SK-N-SH (cell line): ENCODE measurements at regions of chr3 and their contacts with region 1.

Region 1: DNA sequence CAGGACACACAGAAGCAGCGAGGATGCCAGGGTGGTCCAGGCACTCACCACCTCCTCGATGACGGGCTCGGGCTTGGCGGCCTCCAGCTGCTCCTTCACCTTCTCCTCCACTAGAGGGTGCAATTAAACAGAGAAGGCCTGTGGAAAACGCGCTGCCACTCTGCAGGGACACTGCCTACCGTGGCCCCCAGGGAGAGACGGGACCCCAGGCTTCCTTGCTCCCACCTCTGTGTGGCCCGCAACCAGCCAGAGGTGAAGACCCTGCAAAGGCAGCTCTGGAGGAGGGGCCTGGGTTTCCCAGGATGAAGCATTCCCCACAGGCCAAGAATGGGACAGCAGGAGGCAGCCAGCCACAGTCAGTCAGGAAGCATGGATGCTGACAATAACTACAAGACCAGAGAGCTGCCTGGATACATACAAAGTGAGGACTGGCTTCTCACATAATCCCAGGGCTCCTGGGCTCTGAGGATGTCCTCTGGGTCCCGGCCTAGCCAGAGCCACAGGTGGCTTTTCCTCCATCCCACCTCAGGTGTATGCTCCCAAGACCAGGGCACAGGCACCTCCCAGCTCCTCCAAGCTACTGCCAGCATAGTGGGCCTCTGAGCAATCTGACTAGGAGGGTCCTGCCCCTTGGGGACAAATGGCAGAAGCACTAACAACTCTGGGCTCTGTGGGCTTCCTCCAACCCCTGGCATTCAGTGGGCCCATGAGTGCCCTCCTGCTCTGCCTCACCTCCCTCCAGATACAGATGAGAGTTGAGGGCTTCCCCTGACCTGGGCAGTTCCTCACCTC is 46.2 kb downstream of the PTH1R start:
- DNase-seq: peak; percentile 79
- H3K4me3 ChIP-seq: peak overlapping the region in 1 of 2 experiments; percentile 35; a peak in 1 of 4 replicates
- H3K27ac ChIP-seq: no peak overlapping the region
- H3K4me1 ChIP-seq: no peaks in the 10 kb centered on the region
- H3K27me3 ChIP-seq: no peaks in the 10 kb centered on the region
- CTCF ChIP-seq: peak; percentile 81
- EP300 ChIP-seq: no peak
- RAD21 ChIP-seq: peak; percentile 81

Region 2: DNA sequence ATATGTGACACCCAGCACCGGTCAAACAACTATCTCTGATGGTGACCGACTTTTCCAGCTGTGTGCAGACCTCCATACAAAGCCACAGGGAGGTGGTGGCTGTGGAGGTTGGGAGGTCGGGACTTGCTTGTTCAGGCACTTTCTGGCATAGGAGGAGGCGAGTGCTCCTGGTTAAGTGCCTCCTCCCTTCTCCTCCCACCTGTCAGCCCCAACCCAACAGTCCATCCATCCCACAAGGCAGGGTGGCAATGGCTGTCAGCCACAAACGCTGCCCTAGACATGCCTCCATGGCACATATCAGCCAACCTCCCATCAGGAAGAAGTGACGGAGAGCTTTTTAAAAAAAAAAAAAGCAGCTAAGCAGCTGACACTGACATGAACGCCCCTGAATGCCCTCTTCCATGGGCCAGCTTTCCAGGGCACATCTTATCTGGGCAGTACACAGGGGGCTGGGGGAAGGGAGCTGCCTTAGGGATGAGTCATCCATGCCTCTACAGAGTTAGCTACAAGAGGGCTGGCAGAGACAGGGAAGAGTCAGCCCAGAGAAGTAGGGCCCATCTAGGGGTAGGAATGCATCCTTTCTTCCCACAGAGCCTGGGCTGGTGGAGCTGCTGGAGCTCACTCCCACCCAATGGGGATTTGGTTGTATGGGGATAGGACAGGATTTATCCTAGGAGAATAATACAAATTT is 11.6 kb after region 1 on chr3:
- CTCF ChIA-PET with region 1: interaction called, 31 read pairs
- POLR2A ChIA-PET with region 1: no interaction called
- DNase-seq: peak; percentile 64
- H3K4me3 ChIP-seq: no peak overlapping the region
- H3K27ac ChIP-seq: peak overlapping the region; percentile 89 to 91
- H3K4me1 ChIP-seq: peaks cover 53 to 54% of the 10 kb centered on the region in 2 experiments
- H3K27me3 ChIP-seq: no peaks in the 10 kb centered on the region
- CTCF ChIP-seq: peak; percentile 82
- EP300 ChIP-seq: peak; percentile 50 to 75; a peak in 2 of 4 replicates
- RAD21 ChIP-seq: peak; percentile 39; the same call in 1 of the 2 replicates

Region 3: GRCh38 chr3:46960081-46960701 is 36.4 kb after region 1 on chr3:
- CTCF ChIA-PET with region 1: interaction called, 25 read pairs
- POLR2A ChIA-PET with region 1: no interaction called
- DNase-seq: peak; percentile 50
- H3K4me3 ChIP-seq: no peak overlapping the region
- H3K27ac ChIP-seq: peak overlapping the region; percentile 29 to 64; a peak in 3 of 4 replicates
- H3K4me1 ChIP-seq: peaks cover 15 to 52% of the 10 kb centered on the region in 2 experiments; a peak in 2 of 4 replicates
- H3K27me3 ChIP-seq: no peaks in the 10 kb centered on the region
- CTCF ChIP-seq: no peak
- EP300 ChIP-seq: no peak
- RAD21 ChIP-seq: no peak

Region 4: GRCh38 chr3:46976326-46977190 is 52.8 kb after region 1 on chr3 and contains the start of gene CCDC12:
- CTCF ChIA-PET with region 1: interaction called, 29 read pairs
- POLR2A ChIA-PET with region 1: no interaction called
- DNase-seq: peak; percentile 96
- H3K4me3 ChIP-seq: peak within 1 kb of the TSS; percentile 74 to 96
- H3K27ac ChIP-seq: peak within 1 kb of the TSS; percentile 95 to 96
- H3K4me1 ChIP-seq: peaks cover 3 to 22% of the 10 kb centered on the region in 2 experiments; a peak in 1 of 4 replicates
- H3K27me3 ChIP-seq: no peaks in the 10 kb centered on the region
- CTCF ChIP-seq: no peak
- EP300 ChIP-seq: peak in 1 of 2 experiments; percentile 35; a peak in 1 of 4 replicates
- RAD21 ChIP-seq: no peak
- polyA plus RNA-seq, gene CCDC12: 53.2 and 105 TPM in 2 replicates

Region 5: DNA sequence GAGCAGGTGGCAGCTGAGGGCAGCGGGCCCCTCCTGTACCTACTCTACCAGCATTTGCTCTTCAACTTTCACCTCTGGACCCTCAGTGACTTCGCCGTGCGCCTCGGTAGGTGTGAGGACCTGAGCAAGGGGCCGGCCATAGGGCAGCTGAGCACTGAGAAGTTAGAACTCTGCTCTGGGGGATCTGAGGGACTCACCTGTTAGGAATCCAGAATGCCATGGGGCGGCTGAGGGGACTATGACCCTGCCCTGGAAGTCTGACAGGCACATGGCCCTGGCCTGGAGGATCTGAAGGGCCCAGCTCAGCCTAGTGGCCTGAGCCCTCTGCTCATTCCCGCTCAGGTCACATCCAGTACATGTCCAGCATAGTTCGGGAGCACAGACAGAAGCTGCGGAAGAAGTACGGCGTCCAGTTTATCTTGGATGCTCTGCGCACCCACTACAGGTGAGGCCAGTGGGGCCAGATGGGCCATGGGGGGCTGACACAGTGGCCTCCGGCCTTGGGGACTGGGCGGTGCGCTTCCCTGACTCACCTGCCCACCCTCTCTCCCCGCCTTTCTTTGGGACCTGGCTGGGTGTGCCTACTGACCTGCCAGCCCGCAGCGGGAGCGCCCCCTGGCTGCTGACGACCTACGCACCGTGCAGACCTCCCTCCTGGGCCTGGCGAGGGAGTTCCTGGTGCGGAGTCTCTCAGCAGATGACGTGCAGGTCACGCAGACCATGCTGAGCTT is 74.5 kb after region 1 on chr3:
- CTCF ChIA-PET with region 1: interaction called, 44 read pairs
- POLR2A ChIA-PET with region 1: interaction called, 3 read pairs
- DNase-seq: peak; percentile 90
- H3K4me3 ChIP-seq: peak overlapping the region in 1 of 2 experiments; percentile 32; a peak in 1 of 4 replicates
- H3K27ac ChIP-seq: no peak overlapping the region
- H3K4me1 ChIP-seq: peaks cover 0 to 2% of the 10 kb centered on the region in 2 experiments; a peak in 1 of 4 replicates
- H3K27me3 ChIP-seq: no peaks in the 10 kb centered on the region
- CTCF ChIP-seq: peak; percentile 72
- EP300 ChIP-seq: no peak
- RAD21 ChIP-seq: peak; percentile 75

Region 6: DNA sequence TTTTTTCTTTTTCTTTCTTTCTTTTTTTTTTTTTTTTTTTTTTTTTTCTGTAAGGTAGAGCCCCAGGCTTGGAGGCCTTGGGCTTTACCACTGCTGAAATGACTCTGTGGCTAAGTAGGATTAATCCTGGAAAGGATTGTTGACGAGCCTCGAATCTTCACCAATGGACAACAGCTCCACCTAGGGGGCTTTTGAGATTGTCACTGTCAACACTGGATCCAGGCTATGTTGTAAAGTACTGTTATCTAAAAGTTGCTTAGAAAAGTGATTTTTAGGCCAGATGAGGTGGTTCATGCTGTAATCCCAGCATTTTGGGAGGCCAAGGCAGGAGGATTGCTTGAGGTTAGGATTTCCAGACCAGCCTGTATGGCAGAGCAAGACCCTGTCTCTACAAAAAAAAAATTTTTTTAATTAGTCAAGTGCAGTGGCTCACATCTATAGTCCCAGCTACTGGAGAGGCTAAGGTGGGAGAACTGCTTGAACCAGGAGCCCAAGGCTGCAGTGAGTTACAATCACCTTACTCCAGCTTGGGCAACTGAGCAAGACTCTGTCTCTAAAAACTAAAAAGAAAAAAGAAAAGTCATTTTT is 400.6 kb after region 1 on chr3:
- CTCF ChIA-PET with region 1: interaction called, 14 read pairs
- POLR2A ChIA-PET with region 1: no interaction called
- DNase-seq: peak; percentile 79
- H3K4me3 ChIP-seq: no peak overlapping the region; a peak in 1 of 4 replicates
- H3K27ac ChIP-seq: no peak overlapping the region
- H3K4me1 ChIP-seq: no peaks in the 10 kb centered on the region
- H3K27me3 ChIP-seq: no peaks in the 10 kb centered on the region
- CTCF ChIP-seq: peak; percentile 79
- EP300 ChIP-seq: no peak
- RAD21 ChIP-seq: peak; percentile 88